Activated CD4-positive, alpha-beta T cell treated with anti-CD3 and anti-CD28 coated beads, Interleukin-2, amount 10 ng/mL, durations not matched to agents 24 days and 14 days (primary cell): ENCODE measurements at regions of chr19 and their contacts with region 1.

Region 1: GRCh38 chr19:13986348-13986904 is 19.7 kb downstream of the RFX1 start:
- DNase-seq: peak; percentile 99
- H3K4me3 Mint-ChIP-seq: peak overlapping the region; percentile 80
- H3K27ac Mint-ChIP-seq: peak overlapping the region; percentile 95
- H3K4me1 Mint-ChIP-seq: peaks cover 43% of the 10 kb centered on the region
- H3K27me3 Mint-ChIP-seq: no peaks in the 10 kb centered on the region

Region 2: GRCh38 chr19:14031719-14032480 is 45.5 kb after region 1 on chr19 and contains the start of gene IL27RA:
- intact Hi-C with region 1: loop called (anchors 1 kb)
- DNase-seq: peak; percentile 95
- H3K4me3 Mint-ChIP-seq: peak within 1 kb of the TSS; percentile 97
- H3K27ac Mint-ChIP-seq: peak within 1 kb of the TSS; percentile 95
- H3K4me1 Mint-ChIP-seq: peaks cover 18% of the 10 kb centered on the region
- H3K27me3 Mint-ChIP-seq: peaks cover 7% of the 10 kb centered on the region
- total RNA-seq, gene IL27RA: 81.6 and 86.4 TPM in 2 replicates

Region 3: DNA sequence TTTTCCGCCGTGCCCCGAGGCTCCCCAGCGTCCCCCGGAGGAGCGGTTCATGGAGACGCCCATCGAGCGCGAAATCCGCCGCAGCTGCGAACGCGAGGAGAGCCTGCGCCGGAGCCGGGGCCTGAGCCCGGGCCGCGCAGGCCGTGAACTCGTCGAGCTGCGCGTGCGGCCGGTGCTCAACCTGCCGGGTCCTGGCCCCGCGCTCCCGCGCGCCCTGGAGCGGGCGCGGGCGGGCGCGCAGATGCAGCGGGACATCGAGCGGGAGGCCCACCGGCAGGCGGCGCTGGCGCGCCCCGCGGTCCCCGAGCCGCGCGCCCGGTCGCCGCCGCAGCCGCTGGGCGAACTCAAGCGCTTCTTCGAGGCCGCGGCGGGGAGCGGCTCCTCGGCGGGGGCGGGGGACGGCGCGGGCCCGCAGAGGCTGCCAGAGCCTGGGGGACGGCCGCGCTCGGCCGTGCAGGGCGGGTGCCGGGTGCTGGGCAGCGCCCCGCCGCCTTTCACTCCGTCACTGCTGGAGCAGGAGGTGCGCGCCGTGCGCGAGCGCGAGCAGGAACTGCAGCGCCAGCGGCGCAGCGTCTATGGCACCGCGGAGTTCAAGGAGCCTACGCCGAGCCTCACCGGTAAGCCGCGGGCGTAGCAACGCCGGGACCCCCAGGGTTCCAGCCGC is 87.0 kb after region 1 on chr19:
- intact Hi-C with region 1: loop called (anchors 5 kb)
- DNase-seq: peak; percentile 94
- H3K4me3 Mint-ChIP-seq: peak overlapping the region; percentile 99
- H3K27ac Mint-ChIP-seq: peak overlapping the region; percentile 99
- H3K4me1 Mint-ChIP-seq: peaks cover 16% of the 10 kb centered on the region
- H3K27me3 Mint-ChIP-seq: peaks cover 6% of the 10 kb centered on the region